HEK293 (cell line): ENCODE measurements at regions of chr12 and their contacts with region 1.

Region 1: GRCh38 chr12:132986001-132986912 is at the start of gene ZNF26:
- H3K4me3 ChIP-seq: peak within 1 kb of the TSS; percentile 90
- H3K27ac ChIP-seq: peak within 1 kb of the TSS; percentile 43; the same call in 1 of the 2 replicates
- H3K4me1 ChIP-seq: no peaks in the 10 kb centered on the region
- CTCF ChIP-seq: no peak

Region 2: DNA sequence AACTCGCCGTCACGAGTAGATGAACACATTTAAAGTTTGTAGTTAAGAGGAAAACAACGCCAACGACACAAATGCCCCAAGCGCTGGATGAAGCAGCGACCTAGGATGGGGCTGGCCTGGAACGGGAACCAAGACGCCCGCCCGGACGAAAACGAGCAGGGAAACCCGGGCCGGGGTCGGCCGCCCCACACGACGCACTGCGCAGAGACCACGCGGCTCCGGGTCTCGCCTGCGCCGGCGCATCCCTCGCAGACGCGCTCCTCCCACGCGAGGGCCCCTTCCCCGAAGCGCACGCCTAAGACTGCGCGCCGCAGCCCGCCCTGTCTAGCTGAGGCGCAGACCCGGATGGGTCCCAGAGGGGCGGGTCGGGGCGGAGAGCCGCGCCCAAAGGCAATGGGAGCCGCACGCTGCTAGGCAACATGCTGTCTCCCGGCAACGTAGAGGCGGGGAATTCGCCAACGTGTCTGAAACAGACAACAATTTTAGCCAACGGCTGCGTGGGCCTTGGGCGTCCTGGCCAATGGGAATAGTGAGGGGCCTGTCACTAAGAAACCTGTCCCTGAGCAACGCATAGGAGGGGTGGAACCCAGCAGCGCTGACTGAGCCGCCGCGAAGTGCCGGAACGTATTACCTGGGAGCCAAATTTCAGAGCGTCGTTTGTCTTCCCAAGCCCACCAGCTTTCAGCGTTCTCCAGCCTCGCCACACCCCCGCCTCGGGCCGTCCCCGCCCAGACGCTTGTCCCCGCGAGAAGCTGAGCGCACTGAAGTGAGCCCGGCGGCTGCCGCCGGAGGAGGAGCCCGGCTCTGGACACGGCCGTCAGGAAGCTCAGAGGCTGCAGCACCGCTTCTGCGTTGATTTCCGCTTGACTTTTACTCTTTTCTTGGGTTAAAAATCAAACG is 77.9 kb before region 1 on chr12:
- CTCF ChIA-PET with region 1: no interaction called
- POLR2A ChIA-PET with region 1: interaction called, 10 read pairs
- H3K4me3 ChIP-seq: peak overlapping the region; percentile 53
- H3K27ac ChIP-seq: peak overlapping the region; percentile 43
- H3K4me1 ChIP-seq: peaks cover 2% of the 10 kb centered on the region; the same call in 1 of the 2 replicates
- CTCF ChIP-seq: no peak

Region 3: DNA sequence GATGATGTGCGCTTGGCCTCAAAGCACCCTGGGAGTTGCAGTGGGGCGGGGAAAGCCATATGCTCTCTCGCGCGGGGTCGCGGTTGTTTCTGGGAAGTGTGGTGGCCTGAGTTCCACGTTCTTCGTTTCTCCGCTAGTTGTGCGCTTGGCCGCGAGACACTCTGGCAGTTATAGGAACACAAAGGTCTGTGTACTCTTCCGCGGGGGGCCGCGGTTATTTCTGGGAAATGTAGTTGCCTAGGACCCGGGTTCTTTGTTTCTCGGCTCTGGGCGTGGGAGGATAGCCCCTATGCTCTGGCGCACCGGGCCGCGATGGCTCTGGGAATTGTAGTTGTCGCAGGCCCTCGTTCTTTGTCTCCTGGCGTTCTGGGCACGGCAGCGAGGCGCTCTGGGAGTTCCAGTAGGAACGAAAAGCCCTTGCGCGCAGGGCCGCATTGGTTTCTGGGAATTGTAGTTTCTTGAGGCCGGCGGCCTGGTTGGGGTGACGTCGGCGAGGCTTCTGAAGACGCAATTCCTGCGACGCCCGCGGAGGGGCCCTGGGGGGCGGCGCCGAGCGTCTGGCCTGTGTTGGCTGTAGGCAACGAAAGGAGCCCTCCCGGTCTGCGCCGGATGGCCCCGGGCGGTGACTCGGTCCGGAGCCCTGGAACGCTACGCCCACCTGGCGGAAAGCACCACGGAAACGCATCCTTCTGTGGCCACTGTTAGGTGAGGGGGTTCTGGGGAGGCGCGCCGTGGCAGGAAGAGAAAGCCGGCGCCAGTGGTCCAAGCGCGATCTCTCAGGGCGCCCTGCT is 94.3 kb after region 1 on chr12 and contains the start of gene ZNF140:
- CTCF ChIA-PET with region 1: no interaction called
- POLR2A ChIA-PET with region 1: interaction called, 11 read pairs
- H3K4me3 ChIP-seq: peak within 1 kb of the TSS; percentile 79
- H3K27ac ChIP-seq: peak within 1 kb of the TSS; percentile 89
- H3K4me1 ChIP-seq: no peaks in the 10 kb centered on the region
- CTCF ChIP-seq: peak; percentile 68